Panc1 (cell line): ENCODE measurements at regions of chr7 and their contacts with region 1.

Region 1: GRCh38 chr7:149261829-149262617 is at the start of gene ZNF783:
- DNase-seq: no peak
- ATAC-seq: peak; percentile 96
- H3K4me3 ChIP-seq: peak within 1 kb of the TSS; percentile 53 to 64
- H3K27ac ChIP-seq: peak within 1 kb of the TSS; percentile 90
- H3K4me1 ChIP-seq: peaks cover 8% of the 10 kb centered on the region; the same call in 1 of the 2 replicates
- H3K27me3 ChIP-seq: no peaks in the 10 kb centered on the region
- CTCF ChIP-seq: peak; percentile 95
- total RNA-seq, gene ZNF783: 16.6 TPM

Region 2: DNA sequence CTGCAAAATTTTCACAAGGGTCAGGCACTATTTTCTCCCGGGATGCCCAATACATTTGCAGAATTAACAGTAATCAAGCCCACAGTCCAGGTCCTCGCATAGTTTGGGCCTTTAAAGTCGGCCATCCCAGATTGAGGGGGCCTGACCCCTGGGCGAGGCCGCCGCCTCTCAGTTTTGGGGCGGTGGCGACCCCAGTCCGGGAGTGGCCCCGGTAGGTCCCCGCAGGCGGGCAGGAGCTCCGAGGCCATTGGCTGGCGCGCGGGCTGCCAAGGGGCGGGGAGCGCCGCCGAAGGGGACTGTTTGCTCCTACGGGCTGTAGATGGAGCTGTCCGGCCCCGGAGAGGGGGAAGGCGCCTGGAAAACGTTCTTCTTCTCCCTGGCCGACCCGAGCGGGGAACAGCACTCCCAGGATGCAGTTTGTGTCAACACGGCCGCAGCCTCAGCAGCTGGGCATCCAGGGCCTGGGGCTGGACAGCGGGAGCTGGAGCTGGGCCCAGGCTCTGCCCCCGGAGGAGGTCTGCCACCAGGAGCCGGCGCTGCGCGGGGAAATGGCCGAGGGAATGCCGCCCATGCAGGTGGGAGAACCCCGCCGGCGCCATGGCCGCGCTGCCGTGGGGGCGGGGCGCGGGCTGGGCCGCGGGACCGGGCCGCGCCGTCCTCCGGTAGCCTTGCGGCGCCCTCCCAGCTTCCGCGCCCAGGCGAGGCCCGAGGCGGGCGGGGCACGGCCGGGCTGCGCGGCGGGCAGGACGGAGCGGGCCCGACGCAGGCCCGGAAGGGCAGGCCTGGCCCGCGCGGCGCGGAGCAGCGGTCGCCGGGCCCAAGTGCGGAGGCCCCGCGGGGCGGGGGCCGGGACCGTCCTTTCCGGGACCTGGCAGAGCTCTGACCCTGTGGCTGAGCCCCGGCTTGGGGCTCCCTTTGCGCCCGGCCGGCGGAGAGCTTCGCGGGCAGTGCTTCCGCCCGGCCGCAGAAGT is 66.6 kb before region 1 on chr7 and contains the start of gene ZNF282:
- CTCF ChIA-PET with region 1: interaction called, 11 read pairs
- POLR2A ChIA-PET with region 1: no interaction called
- in situ Hi-C with region 1: no loop called
- intact Hi-C with region 1: no loop called
- DNase-seq: peak; percentile 67
- ATAC-seq: peak; percentile 96
- H3K4me3 ChIP-seq: peak within 1 kb of the TSS; percentile 93 to 98
- H3K27ac ChIP-seq: peak within 1 kb of the TSS; percentile 93
- H3K4me1 ChIP-seq: peaks cover 9% of the 10 kb centered on the region
- H3K27me3 ChIP-seq: no peaks in the 10 kb centered on the region
- CTCF ChIP-seq: peak; percentile 90
- total RNA-seq, gene ZNF282: 31.6 TPM